Activated CD4-positive, alpha-beta T cell treated with anti-CD3 and anti-CD28 coated beads, Interleukin-2, amount 10 ng/mL, durations not matched to agents 24 days and 14 days (primary cell): ENCODE measurements at regions of chr6 and their contacts with region 1.

Region 1: DNA sequence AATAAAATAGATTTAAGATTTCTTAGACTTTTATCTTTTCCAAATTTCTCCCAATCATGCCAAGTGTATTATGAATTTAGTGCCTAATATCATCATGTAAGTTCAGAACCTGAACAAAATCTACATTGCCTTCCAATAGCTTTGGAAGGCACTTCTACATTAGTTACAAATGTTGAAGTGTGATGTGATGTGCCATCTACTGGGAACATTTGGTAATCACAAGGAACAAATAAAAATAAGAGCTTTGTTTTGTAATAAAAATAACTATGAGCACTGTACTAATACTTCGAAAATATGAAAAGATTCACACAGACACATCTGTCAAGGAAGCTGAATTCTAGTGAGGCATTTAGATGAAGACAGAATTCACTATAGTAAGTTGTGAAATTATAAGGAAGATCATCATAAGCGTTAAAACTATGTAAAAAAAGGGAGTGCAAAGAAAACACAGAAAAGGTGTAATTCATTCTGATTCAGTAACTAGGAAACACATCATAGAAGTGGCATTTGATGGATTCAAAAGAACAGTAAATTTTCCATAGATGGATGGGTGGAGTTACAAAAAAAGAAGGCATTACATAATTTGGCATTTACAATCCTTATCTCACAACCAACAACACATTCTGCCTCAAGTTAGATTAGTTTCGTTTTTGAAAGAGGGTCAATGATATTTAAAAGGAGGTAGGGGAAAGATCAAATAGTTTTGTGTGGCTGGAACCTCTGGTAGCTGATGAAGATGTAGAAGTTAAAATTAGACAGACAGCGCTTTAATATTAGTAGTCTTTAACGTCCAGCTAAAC is 161.0 kb downstream of the ASCC3 start:
- DNase-seq: no peak
- H3K4me3 Mint-ChIP-seq: no peak overlapping the region
- H3K27ac Mint-ChIP-seq: no peak overlapping the region
- H3K4me1 Mint-ChIP-seq: peaks cover 10% of the 10 kb centered on the region
- H3K27me3 Mint-ChIP-seq: no peaks in the 10 kb centered on the region

Region 2: DNA sequence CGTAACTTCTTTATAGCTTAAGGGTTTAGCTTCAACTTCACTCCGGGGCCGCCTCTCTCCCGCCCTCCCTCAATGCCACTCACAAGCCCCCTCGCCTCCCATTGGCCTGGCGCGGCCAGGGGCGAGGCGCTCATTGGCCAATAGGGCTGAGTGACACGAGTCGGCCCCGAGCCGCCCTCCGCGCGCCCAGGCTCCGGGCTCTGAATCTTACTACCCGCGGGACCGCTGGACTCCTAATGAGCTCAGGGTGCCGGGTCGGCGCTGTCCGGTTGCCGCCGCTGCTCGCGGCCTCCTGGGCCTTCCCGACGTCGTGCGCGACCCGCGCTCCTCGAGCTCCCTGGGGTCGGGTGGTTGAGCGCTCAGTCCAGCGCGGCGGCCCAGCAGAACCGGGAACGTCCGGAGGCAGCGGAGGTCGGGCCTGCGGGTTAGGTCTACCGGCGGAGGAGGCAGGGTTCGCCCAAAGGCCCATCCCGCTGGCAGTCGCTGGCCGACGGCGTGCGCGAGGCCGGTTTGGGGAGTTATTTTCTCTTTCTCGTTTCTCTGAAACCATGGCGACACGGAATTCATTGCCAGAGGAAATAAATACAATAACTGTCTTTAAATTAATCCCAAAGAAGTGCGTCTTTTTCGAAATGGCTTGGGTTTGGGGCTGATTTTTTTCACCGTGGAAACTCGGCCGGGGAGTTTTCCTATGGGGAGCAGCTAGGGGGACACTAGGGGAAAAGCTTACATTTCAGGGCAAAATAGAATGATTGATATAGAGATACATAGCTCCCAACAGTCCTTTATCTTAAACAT is 255.0 kb before region 1 on chr6 and contains the start of gene SIM1:
- intact Hi-C with region 1: no loop called
- DNase-seq: no peak
- H3K4me3 Mint-ChIP-seq: no peak within 1 kb of the TSS
- H3K27ac Mint-ChIP-seq: peak within 1 kb of the TSS; percentile 20
- H3K4me1 Mint-ChIP-seq: peaks cover 19% of the 10 kb centered on the region
- H3K27me3 Mint-ChIP-seq: peaks cover 85% of the 10 kb centered on the region
- total RNA-seq, gene SIM1: not detected in 2 replicates

Region 3: GRCh38 chr6:100488244-100488643 is 231.8 kb before region 1 on chr6:
- intact Hi-C with region 1: no loop called
- DNase-seq: no peak
- H3K4me3 Mint-ChIP-seq: no peak overlapping the region
- H3K27ac Mint-ChIP-seq: no peak overlapping the region
- H3K4me1 Mint-ChIP-seq: peaks cover 6% of the 10 kb centered on the region
- H3K27me3 Mint-ChIP-seq: peaks cover 32% of the 10 kb centered on the region

Region 4: DNA sequence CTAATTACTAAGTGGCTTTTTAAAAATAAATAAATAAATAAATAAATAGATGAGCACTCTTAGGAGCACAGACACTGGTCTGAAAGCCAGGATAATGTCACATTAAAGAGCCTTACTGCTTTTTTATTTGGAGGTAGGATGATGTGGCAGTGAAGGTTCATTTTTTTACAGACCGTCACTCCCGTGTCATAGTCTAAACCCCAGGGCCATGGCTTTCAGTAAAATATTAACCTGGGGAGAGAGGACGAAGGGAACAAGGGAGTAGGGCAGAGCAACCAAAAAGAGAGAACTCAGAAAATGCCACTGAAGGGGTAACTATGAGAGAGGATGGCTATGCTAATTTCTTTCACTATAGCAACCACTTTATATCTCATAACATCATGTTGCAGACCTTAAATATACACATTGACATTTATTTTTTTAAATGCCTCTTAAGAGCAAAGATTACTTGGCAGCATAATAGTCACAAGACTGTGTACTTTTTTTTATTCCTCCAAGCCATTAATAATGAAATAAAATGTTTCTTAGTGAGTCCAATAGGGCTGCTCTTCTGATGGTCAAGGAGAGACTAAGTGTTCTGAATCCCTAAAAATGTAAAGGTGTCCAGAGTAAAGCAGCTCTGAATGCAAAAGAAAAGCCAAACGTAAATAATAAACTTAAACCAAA is 154.5 kb before region 1 on chr6:
- intact Hi-C with region 1: no loop called
- DNase-seq: no peak
- H3K4me3 Mint-ChIP-seq: no peak overlapping the region
- H3K27ac Mint-ChIP-seq: no peak overlapping the region
- H3K4me1 Mint-ChIP-seq: no peaks in the 10 kb centered on the region
- H3K27me3 Mint-ChIP-seq: no peaks in the 10 kb centered on the region

Region 5: DNA sequence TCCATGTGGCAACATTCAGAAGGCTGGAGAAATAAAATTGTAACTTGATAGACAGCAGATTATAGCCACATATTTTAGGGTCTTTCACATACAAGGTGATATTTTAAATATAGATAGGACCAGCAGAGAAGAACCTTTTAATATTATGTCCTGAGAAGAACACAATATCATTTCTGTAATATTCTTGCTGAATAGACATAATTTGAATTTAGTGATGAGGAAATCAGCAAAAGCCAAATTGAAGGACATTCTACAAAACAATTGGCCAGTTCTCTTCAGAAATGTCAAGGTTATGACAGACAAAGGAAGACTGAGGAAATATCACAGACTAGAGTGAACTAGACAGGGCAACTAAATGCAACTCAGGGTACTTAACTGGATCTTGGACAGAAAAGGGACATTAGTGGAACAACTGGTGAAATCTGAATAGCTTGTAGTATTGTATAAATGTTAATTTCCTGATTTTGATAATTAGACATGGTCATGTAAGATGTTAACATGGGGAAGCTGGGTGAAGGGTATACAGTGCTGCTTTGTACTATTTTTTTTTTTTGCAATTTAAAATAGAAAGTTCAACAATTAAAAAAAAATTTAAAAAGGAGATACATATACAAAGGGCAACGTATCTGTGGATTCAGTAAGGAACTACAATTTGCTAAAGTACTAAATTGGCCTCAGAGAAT is 120.9 kb before region 1 on chr6:
- intact Hi-C with region 1: no loop called
- DNase-seq: no peak
- H3K4me3 Mint-ChIP-seq: no peak overlapping the region
- H3K27ac Mint-ChIP-seq: no peak overlapping the region
- H3K4me1 Mint-ChIP-seq: no peaks in the 10 kb centered on the region
- H3K27me3 Mint-ChIP-seq: no peaks in the 10 kb centered on the region

Region 6: DNA sequence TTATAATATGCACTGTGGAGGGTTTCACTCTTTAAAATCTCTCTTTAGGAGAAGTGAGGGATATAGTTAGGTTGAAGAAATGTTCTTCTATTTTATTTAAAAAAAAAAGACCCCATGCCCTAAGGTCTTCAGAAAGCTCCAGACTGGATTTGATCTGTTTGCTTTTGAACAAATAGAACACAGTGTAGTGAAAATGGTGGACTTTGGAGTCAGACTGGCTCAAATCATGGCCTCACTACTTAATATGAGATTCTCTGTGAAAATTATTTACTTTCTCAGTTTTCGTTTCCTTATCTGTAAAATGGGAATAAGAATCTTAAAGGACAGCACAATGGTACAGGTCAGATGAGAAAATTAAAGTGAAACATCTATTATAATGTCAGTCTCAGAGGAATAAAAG is 42.8 kb before region 1 on chr6:
- intact Hi-C with region 1: loop called (anchors 1 kb)
- DNase-seq: no peak
- H3K4me3 Mint-ChIP-seq: no peak overlapping the region
- H3K27ac Mint-ChIP-seq: no peak overlapping the region
- H3K4me1 Mint-ChIP-seq: no peaks in the 10 kb centered on the region
- H3K27me3 Mint-ChIP-seq: no peaks in the 10 kb centered on the region